CD8-positive, alpha-beta T cell (primary cell): ENCODE measurements at regions of chr12 and their contacts with region 1.

Region 1: GRCh38 chr12:95942524-95943329 is at the start of gene CCDC38:
- DNase-seq: peak; percentile 63 to 92 (median 82)
- ATAC-seq: peak; percentile 92
- H3K4me3 ChIP-seq: peak within 1 kb of the TSS; percentile 67 to 83
- H3K4me3 Mint-ChIP-seq: peak within 1 kb of the TSS; percentile 96
- H3K27ac ChIP-seq: peak within 1 kb of the TSS; percentile 71 to 79
- H3K27ac Mint-ChIP-seq: peak within 1 kb of the TSS; percentile 92
- H3K4me1 ChIP-seq: peaks cover 11% of the 10 kb centered on the region
- H3K4me1 Mint-ChIP-seq: peaks cover 10% of the 10 kb centered on the region
- H3K27me3 ChIP-seq: no peaks in the 10 kb centered on the region
- H3K27me3 Mint-ChIP-seq: no peaks in the 10 kb centered on the region
- CTCF ChIP-seq: no peak
- total RNA-seq, gene CCDC38: not detected

Region 2: DNA sequence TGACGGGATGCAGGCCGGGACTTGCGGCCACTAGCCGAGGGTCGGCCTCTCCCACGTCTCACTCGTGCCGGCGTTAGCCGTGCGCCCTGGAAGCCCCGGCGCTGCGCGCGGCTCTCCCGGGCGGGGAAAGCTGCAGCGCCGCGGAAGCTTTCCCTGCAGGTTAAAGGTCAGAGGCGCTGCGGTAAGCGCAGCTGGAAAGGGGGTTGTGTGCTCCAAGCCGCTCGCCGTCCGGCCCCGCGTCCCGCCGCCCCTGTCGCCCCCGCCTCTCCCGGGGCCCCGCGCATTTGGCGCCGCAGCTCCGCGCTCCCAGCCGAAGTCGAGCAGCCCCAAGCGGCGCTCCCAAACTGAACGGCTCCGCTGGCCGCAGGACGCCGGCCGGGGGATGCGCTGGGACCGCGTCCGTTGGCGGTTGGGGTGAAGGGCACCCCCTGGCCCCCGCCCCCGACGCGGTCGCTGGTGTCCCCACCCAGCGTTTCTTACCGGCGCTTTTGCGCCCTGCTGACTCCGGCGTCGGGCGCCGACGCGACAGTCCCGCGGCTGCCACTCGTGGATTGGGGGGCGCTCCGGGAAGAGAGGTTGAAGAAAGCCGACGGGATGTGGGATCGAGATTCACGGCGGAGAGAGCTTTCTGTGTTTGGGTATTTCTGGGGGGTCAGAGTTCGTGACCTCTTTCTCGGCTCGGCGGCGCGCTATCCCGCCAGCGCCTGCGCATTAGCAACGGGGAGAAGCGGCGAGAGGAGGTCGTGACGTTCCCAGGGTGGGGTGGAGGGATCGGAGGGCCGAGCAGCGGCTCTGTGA is 869.6 kb before region 1 on chr12 and contains the start of gene NR2C1:
- CTCF ChIA-PET with region 1: no interaction called
- POLR2A ChIA-PET with region 1: no interaction called
- intact Hi-C with region 1: loop called in 1 of 2 experiments (anchors 2 kb)
- DNase-seq: peak; percentile 83 to 97 (median 91)
- ATAC-seq: peak; percentile 98
- H3K4me3 ChIP-seq: peak within 1 kb of the TSS; percentile 86 to 96
- H3K4me3 Mint-ChIP-seq: peak within 1 kb of the TSS; percentile 97
- H3K27ac ChIP-seq: peak within 1 kb of the TSS; percentile 71 to 74
- H3K27ac Mint-ChIP-seq: peak within 1 kb of the TSS; percentile 95
- H3K4me1 ChIP-seq: peaks cover 5% of the 10 kb centered on the region
- H3K4me1 Mint-ChIP-seq: peaks cover 26% of the 10 kb centered on the region
- H3K27me3 ChIP-seq: no peaks in the 10 kb centered on the region
- H3K27me3 Mint-ChIP-seq: no peaks in the 10 kb centered on the region
- CTCF ChIP-seq: no peak
- total RNA-seq, gene NR2C1: 40.7 to 49.2 TPM

Region 3: GRCh38 chr12:95858479-95859343 is 84.0 kb before region 1 on chr12 and contains the start of gene SNRPF:
- CTCF ChIA-PET with region 1: no interaction called
- POLR2A ChIA-PET with region 1: no interaction called
- intact Hi-C with region 1: loop called (anchors 1 to 2 kb)
- DNase-seq: peak; percentile 88 to 97 (median 92)
- ATAC-seq: peak; percentile 94
- H3K4me3 ChIP-seq: peak within 1 kb of the TSS; percentile 83 to 86
- H3K4me3 Mint-ChIP-seq: no peak within 1 kb of the TSS
- H3K27ac ChIP-seq: peak within 1 kb of the TSS; percentile 79 to 92
- H3K27ac Mint-ChIP-seq: no peak within 1 kb of the TSS
- H3K4me1 ChIP-seq: peaks cover 22% of the 10 kb centered on the region
- H3K4me1 Mint-ChIP-seq: peaks cover 21% of the 10 kb centered on the region
- H3K27me3 ChIP-seq: peaks cover 0 to 2% of the 10 kb centered on the region in 2 experiments
- H3K27me3 Mint-ChIP-seq: peaks cover 3% of the 10 kb centered on the region
- CTCF ChIP-seq: no peak
- total RNA-seq, gene SNRPF: 42.9 to 49.2 TPM

Region 4: DNA sequence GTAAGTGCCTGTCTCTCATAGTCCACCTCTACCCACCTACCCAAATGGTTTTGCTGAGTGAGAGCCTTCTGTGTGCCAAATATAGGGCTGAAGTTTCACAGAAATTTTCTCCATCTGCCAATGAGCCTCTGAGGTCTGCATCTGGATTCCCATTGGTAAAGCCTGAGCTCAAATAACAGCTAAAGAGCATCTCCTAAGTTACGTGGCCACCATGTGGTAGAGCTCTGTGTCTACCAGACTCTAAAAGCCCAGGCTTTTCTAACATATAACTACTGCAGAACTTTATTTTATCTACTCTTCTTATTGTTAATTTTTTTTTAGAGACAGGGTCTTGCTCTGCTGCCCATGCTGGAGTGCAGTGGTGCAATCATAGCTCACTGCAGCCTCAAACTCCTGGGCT is 16.4 kb after region 1 on chr12:
- CTCF ChIA-PET with region 1: interaction called, 5 read pairs
- POLR2A ChIA-PET with region 1: interaction called, 10 read pairs
- intact Hi-C with region 1: no loop called
- DNase-seq: peak in 2 of 9 experiments; percentile 8 to 11
- ATAC-seq: no peak
- H3K4me3 ChIP-seq: no peak overlapping the region
- H3K4me3 Mint-ChIP-seq: no peak overlapping the region
- H3K27ac ChIP-seq: no peak overlapping the region
- H3K27ac Mint-ChIP-seq: no peak overlapping the region
- H3K4me1 ChIP-seq: no peaks in the 10 kb centered on the region
- H3K4me1 Mint-ChIP-seq: no peaks in the 10 kb centered on the region
- H3K27me3 ChIP-seq: no peaks in the 10 kb centered on the region
- H3K27me3 Mint-ChIP-seq: no peaks in the 10 kb centered on the region
- CTCF ChIP-seq: no peak

Region 5: GRCh38 chr12:96194971-96195844 is 252.5 kb after region 1 on chr12:
- CTCF ChIA-PET with region 1: no interaction called
- POLR2A ChIA-PET with region 1: no interaction called
- intact Hi-C with region 1: loop called (anchors 5 kb)
- DNase-seq: peak; percentile 37 to 93 (median 73)
- ATAC-seq: peak; percentile 70
- H3K4me3 ChIP-seq: peak overlapping the region; percentile 87 to 95
- H3K4me3 Mint-ChIP-seq: peak overlapping the region; percentile 94
- H3K27ac ChIP-seq: peak overlapping the region; percentile 74 to 77
- H3K27ac Mint-ChIP-seq: peak overlapping the region; percentile 97
- H3K4me1 ChIP-seq: peaks cover 43% of the 10 kb centered on the region
- H3K4me1 Mint-ChIP-seq: peaks cover 64% of the 10 kb centered on the region
- H3K27me3 ChIP-seq: no peaks in the 10 kb centered on the region
- H3K27me3 Mint-ChIP-seq: no peaks in the 10 kb centered on the region
- CTCF ChIP-seq: no peak